PC-9 (cell line): ENCODE measurements at regions of chr2 and their contacts with region 1.

Region 1: GRCh38 chr2:230326453-230327417 is at the start of gene SP140L:
- DNase-seq: peak; percentile 70 to 82
- H3K4me3 ChIP-seq: peak within 1 kb of the TSS; percentile 67
- H3K27ac ChIP-seq: peak within 1 kb of the TSS; percentile 58
- H3K4me1 ChIP-seq: peaks cover 19% of the 10 kb centered on the region; the same call in 1 of the 2 replicates
- H3K27me3 ChIP-seq: no peaks in the 10 kb centered on the region
- CTCF ChIP-seq: no peak
- total RNA-seq, gene SP140L: 15.1 and 23.6 TPM in 2 replicates

Region 2: DNA sequence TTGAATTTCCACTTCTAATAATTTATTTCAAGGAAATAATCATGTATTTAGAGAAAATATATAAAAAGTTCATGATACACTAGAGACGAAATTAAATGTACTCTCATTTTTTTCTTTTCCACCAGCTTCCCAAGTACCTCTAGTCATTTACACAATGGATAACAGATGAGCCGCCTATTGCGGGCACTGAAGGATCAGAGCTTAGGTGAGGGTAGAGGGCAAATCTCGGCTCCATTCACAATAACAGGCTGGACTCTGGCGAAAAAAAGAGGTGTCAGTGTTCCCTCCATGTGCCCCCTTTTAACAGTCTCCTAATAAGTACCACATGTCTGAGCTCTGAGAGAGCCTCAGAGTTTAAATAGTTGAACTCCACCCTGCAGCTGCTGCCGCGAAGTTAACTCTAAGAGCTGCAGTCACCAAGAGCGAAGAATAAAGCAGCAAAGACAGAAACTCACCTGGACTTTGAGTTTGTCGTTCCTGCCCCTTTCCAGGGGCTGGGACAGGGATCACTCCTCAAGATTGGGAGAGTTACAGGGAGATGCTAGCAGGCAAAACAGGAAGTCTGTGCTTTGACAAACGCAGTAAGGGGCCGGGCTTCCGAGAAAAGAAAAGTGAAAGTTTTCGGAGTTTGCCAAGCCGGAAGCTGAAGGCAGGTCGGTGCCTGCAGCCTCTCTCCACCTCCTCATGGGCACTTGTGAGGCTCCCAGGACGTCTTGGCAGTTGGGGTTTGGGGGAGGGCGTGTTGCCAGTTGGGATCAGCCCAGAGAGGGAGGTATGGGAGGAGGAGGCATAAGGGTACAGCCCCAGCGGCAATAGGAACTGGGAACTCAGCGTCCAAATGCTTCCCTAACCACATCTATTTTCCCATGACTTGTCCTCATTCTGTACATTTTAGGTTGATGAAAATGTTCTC is 107.1 kb before region 1 on chr2 and contains the start of gene SP110:
- CTCF ChIA-PET with region 1: no interaction called
- POLR2A ChIA-PET with region 1: no interaction called
- intact Hi-C with region 1: loop called (anchors 5 kb)
- DNase-seq: peak; percentile 68 to 79
- H3K4me3 ChIP-seq: peak within 1 kb of the TSS; percentile 65
- H3K27ac ChIP-seq: peak within 1 kb of the TSS; percentile 16; the same call in 1 of the 2 replicates
- H3K4me1 ChIP-seq: peaks cover 29% of the 10 kb centered on the region
- H3K27me3 ChIP-seq: no peaks in the 10 kb centered on the region
- CTCF ChIP-seq: no peak
- total RNA-seq, gene SP110: 6.8 and 10.5 TPM in 2 replicates

Region 3: DNA sequence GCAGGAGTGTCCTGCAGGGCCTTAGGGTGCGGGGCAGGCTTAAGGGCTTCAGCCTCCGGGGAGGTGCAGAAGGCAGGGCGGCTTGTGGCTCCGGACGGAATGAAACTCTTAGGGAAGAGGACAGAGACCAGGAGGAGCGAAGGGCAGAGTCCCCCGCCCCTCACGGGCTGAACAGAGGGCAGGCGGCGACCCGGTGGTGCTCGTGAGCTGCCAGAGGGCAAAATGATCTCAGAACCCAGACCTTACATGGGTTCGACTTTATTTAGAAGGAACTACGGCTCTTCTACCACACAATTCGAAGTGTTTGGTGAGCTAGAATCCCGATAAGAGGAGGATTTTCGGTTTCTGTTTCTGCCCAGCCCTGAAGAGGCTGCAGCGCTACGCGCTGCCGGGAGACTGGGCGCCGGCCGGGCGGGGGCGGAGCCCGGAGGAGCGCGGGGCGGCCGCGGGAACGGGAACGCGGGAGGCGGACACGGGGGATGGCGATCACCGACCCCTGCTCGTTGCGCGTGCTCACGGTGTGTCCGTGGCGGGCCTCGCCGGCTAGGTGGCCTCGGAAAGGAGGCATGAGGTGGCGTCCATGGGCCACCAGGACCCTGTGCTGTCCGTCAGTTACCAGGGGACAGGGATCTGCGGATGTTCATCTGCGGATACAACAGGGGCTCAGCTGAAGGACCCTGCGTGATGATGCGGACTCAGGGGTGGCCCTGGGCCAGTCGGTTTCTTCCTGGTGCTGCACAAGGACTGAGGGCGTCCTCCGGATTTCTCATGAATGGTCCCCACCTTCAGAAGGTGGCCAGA is 85.0 kb after region 1 on chr2:
- CTCF ChIA-PET with region 1: no interaction called
- POLR2A ChIA-PET with region 1: no interaction called
- intact Hi-C with region 1: loop called (anchors 2 kb)
- DNase-seq: peak in 1 of 2 experiments; percentile 55
- H3K4me3 ChIP-seq: peak overlapping the region; percentile 75
- H3K27ac ChIP-seq: no peak overlapping the region
- H3K4me1 ChIP-seq: peaks cover 11% of the 10 kb centered on the region
- H3K27me3 ChIP-seq: no peaks in the 10 kb centered on the region
- CTCF ChIP-seq: no peak

Region 4: GRCh38 chr2:230614913-230615332 is 288.2 kb after region 1 on chr2:
- CTCF ChIA-PET with region 1: no interaction called
- POLR2A ChIA-PET with region 1: no interaction called
- intact Hi-C with region 1: no loop called
- DNase-seq: no peak
- H3K4me3 ChIP-seq: no peak overlapping the region
- H3K27ac ChIP-seq: no peak overlapping the region
- H3K4me1 ChIP-seq: peaks cover 28% of the 10 kb centered on the region
- H3K27me3 ChIP-seq: no peaks in the 10 kb centered on the region
- CTCF ChIP-seq: no peak

Region 5: GRCh38 chr2:230721712-230722111 is 395.0 kb after region 1 on chr2:
- CTCF ChIA-PET with region 1: no interaction called
- POLR2A ChIA-PET with region 1: no interaction called
- intact Hi-C with region 1: loop called (anchors 10 kb)
- DNase-seq: peak in 1 of 2 experiments; percentile 54
- H3K4me3 ChIP-seq: no peak overlapping the region
- H3K27ac ChIP-seq: peak overlapping the region; percentile 18; the same call in 1 of the 2 replicates
- H3K4me1 ChIP-seq: peaks cover 25% of the 10 kb centered on the region
- H3K27me3 ChIP-seq: no peaks in the 10 kb centered on the region
- CTCF ChIP-seq: no peak